ENCODE measurements at regions of chr10 and their contacts with region 1.

Region 1: DNA sequence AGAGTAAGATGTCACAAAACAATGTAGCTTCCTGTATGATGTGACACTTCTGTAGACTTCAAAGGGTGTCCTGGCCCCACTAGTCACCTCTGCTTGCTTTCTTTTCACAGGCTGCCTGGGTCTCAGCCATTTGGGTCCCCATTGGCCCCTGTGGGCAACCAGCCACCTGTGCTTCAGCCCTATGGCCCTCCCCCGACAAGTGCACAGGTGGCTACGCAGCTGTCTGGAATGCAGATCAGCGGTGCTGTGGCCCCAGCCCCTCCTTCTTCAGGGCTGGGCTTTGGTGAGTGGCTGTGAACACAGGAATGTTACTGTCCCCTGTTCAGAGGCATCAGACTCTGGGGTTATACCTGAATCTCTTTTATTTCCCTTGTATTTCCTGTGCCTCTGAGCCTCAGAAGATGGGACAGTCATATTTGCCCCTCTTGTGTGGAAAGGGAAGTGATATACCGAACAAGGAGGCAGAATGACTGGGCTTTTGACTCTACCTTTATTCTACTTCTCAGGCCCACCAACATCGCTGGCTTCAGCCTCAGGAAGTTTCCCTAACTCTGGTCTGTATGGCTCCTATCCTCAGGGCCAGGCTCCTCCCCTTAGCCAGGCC is 15.4 kb downstream of the SEC24C start:
- DNase-seq: peak; percentile 57
- ATAC-seq: peak; percentile 62
- H3K4me3 Mint-ChIP-seq: no peak overlapping the region
- H3K27ac Mint-ChIP-seq: peak overlapping the region; percentile 60
- H3K4me1 Mint-ChIP-seq: peaks cover 57% of the 10 kb centered on the region
- H3K27me3 Mint-ChIP-seq: no peaks in the 10 kb centered on the region

Region 2: GRCh38 chr10:73791871-73792400 is 32.3 kb after region 1 on chr10:
- CTCF ChIA-PET with region 1: no interaction called
- POLR2A ChIA-PET with region 1: interaction called, 11 read pairs
- intact Hi-C with region 1: no loop called
- DNase-seq: no peak
- ATAC-seq: no peak
- H3K4me3 Mint-ChIP-seq: no peak overlapping the region
- H3K27ac Mint-ChIP-seq: no peak overlapping the region
- H3K4me1 Mint-ChIP-seq: peaks cover 8% of the 10 kb centered on the region
- H3K27me3 Mint-ChIP-seq: no peaks in the 10 kb centered on the region

Region 3: GRCh38 chr10:73810735-73811465 is 51.3 kb after region 1 on chr10:
- CTCF ChIA-PET with region 1: no interaction called
- POLR2A ChIA-PET with region 1: no interaction called
- intact Hi-C with region 1: no loop called
- DNase-seq: peak; percentile 72
- ATAC-seq: peak; percentile 22
- H3K4me3 Mint-ChIP-seq: peak overlapping the region; percentile 78
- H3K27ac Mint-ChIP-seq: peak overlapping the region; percentile 91
- H3K4me1 Mint-ChIP-seq: peaks cover 42% of the 10 kb centered on the region
- H3K27me3 Mint-ChIP-seq: no peaks in the 10 kb centered on the region

Measured in activated CD4-positive, alpha-beta T cell treated with anti-CD3 and anti-CD28 coated beads for 36 hours (primary cell).